Activated CD4-positive, alpha-beta T cell treated with anti-CD3 and anti-CD28 coated beads, Interleukin-2, amount 10 ng/mL, durations not matched to agents 24 days and 14 days (primary cell): ENCODE measurements at regions of chr11 and their contacts with region 1.

Region 1: DNA sequence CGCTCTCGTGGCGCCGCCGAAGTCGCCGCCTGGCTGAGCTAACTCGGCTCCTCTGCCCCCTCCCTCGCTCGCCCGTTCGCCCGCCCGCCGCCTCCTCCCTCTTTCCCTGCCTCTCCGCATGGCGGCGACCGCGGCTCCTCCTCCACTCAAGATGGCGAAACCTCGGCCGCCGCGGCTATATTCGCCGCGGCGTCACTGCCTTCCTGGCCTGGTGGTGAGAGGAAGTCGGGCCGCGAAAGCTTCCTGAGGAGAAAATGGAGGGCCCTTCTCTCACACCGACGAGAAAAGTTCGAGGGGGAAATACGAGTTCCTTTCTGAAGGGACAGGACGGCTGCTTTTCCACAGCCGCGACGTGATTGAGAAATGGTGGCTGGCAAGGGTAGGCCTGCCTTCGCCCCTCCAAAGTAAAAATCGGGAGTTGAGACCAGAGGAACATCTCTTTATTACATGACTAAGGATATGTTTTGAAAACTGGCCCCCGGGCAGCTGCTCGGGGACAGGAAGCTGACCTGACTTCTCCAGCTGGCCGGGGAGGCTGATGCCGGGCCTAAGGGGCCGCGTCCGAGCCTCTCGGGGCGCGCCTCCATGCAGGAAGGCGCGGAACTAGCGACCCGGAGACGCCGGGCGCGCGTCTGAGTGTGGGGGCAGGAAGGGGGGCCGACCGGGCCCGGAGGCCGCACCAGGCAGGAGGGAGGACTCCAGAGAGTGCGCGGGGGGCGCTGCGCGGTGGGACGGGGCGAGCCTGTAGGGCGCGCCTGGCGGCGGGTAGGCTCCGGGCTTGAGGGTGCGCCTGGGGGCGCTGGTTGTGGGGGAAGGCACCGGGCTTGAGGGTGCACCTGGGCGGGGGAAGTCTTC is at the start of gene DDX6:
- DNase-seq: peak; percentile 97
- H3K4me3 Mint-ChIP-seq: peak within 1 kb of the TSS; percentile 96
- H3K27ac Mint-ChIP-seq: peak within 1 kb of the TSS; percentile 96
- H3K4me1 Mint-ChIP-seq: peaks cover 27% of the 10 kb centered on the region
- H3K27me3 Mint-ChIP-seq: no peaks in the 10 kb centered on the region
- total RNA-seq, gene DDX6: 117 TPM in 2 replicates

Region 2: DNA sequence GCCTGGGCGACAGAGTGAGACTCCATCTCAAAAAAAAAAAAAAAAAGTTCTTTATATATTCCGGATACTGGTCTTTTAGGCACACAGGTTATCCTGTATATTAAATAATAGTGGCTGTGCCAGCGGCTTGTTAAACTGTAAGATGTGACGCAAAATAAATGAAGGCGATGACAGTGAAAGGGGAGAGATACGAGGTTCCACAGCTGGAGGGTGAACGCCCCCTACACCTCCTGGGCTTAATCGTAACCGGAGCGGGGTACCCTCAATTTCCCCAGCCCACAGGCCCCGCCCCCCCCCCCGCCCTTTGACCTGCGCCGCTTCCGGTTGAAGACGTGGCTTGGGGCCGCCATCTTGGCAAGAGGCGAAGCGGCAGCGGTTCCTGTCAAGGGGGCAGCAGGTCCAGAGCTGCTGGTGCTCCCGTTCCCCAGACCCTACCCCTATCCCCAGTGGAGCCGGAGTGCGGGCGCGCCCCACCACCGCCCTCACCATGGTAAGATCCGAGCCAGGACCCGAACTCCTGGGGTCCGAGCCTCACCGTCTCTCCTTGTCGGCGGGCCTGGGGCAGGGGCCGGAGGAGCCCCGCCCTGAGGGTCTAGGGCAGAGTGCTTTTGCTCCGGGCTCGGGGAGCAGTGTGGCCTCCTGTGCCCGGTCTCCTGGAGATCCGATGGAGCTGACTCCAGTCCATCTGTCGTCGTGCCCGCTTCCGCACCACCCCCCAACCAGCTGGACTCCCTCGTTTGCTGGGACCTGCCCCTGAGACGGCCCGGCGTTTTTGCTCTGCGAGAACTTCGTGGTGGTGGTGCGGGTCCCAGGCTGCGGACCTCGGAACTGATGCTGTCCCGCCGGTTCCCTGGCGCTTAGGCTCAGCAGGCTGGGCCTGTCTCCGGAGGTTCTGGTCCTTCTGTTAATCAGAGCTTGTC is 219.0 kb before region 1 on chr11 and contains the start of gene ARCN1:
- intact Hi-C with region 1: loop called (anchors 5 kb)
- DNase-seq: peak; percentile 93
- H3K4me3 Mint-ChIP-seq: peak within 1 kb of the TSS; percentile 97
- H3K27ac Mint-ChIP-seq: peak within 1 kb of the TSS; percentile 93
- H3K4me1 Mint-ChIP-seq: peaks cover 34% of the 10 kb centered on the region
- H3K27me3 Mint-ChIP-seq: no peaks in the 10 kb centered on the region
- total RNA-seq, gene ARCN1: 147 and 150 TPM in 2 replicates

Region 3: DNA sequence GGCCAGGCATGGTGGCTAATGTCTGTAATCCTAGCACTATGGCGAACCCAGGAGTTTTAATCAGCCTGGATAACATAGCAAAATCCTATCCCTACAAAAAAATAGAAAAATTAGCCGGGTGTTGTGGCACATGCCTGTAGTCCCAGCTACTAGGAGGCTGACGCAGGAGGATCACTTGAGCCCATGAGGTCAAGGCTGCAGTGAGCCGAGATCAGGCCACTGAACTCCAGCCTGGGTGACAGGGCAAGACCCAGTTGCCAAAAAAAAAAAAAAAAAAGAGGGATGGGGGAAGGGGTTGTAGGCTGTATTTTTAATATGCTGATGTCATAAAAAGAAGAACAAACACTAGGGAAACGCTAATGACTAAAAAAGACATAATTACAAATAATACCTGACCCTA is 12.4 kb before region 1 on chr11:
- intact Hi-C with region 1: loop called (anchors 2 kb)
- DNase-seq: no peak
- H3K4me3 Mint-ChIP-seq: no peak overlapping the region
- H3K27ac Mint-ChIP-seq: no peak overlapping the region
- H3K4me1 Mint-ChIP-seq: peaks cover 20% of the 10 kb centered on the region
- H3K27me3 Mint-ChIP-seq: no peaks in the 10 kb centered on the region

Region 4: DNA sequence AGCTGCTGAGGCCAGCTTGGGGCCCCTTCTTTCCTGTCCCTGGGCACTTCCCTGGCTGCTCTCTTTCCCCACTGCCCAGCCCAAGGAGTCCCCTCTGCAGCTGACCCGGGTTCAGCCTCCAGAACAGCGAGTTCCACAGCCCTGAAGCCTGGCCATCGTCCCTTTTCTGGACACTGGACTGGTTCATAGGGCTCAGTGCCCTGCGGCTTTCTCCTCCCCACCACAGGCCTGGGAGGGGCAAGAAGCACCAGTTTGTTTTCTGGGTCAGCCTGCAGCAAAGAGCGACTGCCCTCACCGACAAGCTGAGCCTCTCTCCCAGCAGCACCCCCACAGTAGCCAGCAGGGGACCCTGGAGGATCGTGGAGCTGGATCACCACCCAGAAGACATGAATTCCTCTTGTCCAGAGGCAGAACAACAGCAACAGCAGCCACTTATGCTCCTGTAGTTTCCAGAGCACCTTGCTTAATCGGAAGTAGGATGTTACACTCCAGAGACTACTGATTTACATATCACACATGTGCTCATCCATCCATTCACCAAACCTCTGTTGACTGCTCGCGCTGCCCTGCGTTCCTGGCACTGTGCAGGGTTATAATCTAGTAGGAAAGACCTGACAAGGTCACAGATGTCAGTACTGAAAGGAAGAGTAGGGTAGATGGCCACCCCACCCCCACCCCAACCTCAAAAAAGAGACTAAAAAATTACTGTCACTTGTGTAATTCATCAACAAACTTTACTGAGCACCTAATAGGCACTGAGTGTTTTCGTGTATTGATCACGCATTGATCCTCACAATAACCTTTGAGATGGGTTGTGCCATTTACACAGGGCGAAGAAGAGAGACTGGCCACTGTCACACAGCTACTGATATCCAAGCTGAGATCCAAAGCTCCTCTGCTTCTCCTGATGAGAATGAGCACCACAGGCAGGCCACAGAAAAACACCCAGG is 79.3 kb after region 1 on chr11:
- intact Hi-C with region 1: loop called (anchors 1 kb)
- DNase-seq: peak; percentile 74
- H3K4me3 Mint-ChIP-seq: peak overlapping the region; percentile 74
- H3K27ac Mint-ChIP-seq: peak overlapping the region; percentile 98
- H3K4me1 Mint-ChIP-seq: peaks cover 42% of the 10 kb centered on the region
- H3K27me3 Mint-ChIP-seq: no peaks in the 10 kb centered on the region

Region 5: DNA sequence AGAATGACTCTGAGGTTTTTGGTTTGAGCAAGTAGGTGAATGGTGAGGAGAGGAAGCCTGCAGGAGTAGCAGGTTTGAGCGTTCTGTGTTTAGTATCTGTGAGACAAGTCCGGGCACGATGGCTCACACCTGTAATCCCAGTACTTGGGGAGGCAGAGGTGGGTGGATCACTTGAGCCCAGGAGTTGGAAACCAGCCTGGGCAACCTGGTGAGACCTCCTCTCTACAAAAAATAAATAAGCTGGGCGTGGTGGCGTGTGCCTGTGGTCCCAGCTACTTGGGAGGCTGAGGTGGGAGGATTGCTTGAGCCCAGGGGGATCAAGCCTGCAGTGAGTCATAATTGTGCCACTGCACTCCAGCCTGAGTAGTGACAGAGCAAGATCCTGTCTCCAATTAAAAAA is 196.9 kb after region 1 on chr11:
- intact Hi-C with region 1: no loop called
- DNase-seq: no peak
- H3K4me3 Mint-ChIP-seq: no peak overlapping the region
- H3K27ac Mint-ChIP-seq: no peak overlapping the region
- H3K4me1 Mint-ChIP-seq: no peaks in the 10 kb centered on the region
- H3K27me3 Mint-ChIP-seq: no peaks in the 10 kb centered on the region

Region 6: GRCh38 chr11:118998388-118998717 is 207.0 kb after region 1 on chr11:
- intact Hi-C with region 1: no loop called
- DNase-seq: no peak
- H3K4me3 Mint-ChIP-seq: peak overlapping the region; percentile 90
- H3K27ac Mint-ChIP-seq: peak overlapping the region; percentile 94
- H3K4me1 Mint-ChIP-seq: peaks cover 27% of the 10 kb centered on the region
- H3K27me3 Mint-ChIP-seq: no peaks in the 10 kb centered on the region

Region 7: DNA sequence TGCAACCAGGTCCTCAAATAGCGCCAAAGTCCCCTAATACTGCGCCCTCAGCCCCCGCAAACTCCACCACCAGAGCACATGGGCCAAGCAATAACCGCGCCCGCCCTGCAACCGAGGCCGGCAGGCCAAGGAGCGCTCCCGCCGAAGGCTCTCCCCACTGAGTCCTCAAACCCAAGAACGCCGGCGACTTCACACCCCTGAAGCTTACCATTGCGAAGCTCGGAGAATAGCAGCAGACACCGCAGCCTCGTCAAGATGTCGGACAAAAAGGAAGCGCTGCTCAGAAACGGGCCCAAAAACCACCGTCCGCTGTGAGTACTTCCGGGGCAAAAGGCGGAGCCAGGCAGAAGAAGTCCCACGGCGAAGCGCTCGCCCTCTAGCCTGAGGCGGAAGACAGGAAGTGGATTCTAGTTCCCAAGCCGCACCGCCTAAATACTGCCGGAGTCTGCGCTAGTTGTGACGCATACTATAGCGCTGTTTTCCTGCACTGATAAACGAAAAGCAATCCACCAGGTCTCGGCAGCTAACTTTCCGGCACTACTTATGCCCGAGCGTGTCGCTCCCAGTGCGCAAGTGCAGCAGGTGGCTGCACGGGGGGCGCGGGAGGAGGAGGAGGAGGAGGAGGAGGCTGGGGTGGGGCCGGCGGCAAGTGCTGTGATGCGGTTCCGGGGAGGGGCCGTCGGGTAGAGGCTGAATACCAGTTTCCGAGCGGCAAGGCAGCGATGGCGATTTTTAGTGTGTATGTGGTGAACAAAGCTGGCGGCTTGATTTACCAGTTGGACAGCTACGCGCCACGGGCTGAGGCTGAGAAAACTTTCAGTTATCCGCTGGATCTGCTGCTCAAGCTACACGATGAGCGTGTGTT is 227.0 kb after region 1 on chr11 and contains the starts of genes RPS25 and TRAPPC4:
- intact Hi-C with region 1: loop called (anchors 5 kb)
- DNase-seq: peak; percentile 98
- H3K4me3 Mint-ChIP-seq: peak within 1 kb of the TSS; percentile 100
- H3K27ac Mint-ChIP-seq: peak within 1 kb of the TSS; percentile 99
- H3K4me1 Mint-ChIP-seq: peaks cover 35% of the 10 kb centered on the region
- H3K27me3 Mint-ChIP-seq: no peaks in the 10 kb centered on the region
- total RNA-seq, gene RPS25: 1,641 and 1,650 TPM in 2 replicates
- total RNA-seq, gene TRAPPC4: 141 and 151 TPM in 2 replicates

Region 8: DNA sequence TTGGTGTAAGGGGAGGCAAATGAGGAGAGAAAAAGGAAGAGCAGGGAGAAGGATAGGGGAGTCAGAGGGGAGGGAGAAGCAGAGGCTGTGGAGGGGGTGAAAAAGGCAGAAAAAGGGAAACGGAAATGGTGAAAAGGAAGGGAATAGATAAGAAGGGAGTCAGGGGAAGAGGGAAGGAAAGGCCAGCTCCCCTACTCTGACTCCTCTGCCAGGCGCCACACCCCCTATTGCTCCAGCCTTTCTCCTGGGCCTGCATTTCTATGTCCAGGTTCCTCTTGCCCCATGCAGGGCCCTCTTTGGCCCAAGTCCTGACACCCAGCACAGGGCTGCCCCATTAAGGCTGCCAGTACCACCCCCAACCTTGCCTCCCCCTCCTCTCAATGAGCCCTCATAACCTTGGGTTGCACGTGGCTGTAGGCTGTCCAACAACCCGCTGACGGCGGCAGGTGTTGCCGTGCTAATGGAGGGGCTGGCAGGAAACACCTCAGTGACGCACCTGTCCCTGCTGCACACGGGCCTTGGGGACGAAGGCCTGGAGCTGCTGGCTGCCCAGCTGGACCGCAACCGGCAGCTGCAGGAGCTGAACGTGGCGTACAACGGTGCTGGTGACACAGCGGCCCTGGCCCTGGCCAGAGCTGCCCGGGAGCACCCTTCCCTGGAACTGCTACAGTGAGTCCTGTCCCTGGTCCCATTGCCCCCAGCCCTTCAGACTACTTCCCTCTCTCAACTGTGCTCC is 390.5 kb after region 1 on chr11:
- intact Hi-C with region 1: no loop called
- DNase-seq: no peak
- H3K4me3 Mint-ChIP-seq: no peak overlapping the region
- H3K27ac Mint-ChIP-seq: no peak overlapping the region
- H3K4me1 Mint-ChIP-seq: peaks cover 4% of the 10 kb centered on the region
- H3K27me3 Mint-ChIP-seq: no peaks in the 10 kb centered on the region